MCF 10A (cell line): ENCODE measurements at regions of chr2 and their contacts with region 1.

Region 1: DNA sequence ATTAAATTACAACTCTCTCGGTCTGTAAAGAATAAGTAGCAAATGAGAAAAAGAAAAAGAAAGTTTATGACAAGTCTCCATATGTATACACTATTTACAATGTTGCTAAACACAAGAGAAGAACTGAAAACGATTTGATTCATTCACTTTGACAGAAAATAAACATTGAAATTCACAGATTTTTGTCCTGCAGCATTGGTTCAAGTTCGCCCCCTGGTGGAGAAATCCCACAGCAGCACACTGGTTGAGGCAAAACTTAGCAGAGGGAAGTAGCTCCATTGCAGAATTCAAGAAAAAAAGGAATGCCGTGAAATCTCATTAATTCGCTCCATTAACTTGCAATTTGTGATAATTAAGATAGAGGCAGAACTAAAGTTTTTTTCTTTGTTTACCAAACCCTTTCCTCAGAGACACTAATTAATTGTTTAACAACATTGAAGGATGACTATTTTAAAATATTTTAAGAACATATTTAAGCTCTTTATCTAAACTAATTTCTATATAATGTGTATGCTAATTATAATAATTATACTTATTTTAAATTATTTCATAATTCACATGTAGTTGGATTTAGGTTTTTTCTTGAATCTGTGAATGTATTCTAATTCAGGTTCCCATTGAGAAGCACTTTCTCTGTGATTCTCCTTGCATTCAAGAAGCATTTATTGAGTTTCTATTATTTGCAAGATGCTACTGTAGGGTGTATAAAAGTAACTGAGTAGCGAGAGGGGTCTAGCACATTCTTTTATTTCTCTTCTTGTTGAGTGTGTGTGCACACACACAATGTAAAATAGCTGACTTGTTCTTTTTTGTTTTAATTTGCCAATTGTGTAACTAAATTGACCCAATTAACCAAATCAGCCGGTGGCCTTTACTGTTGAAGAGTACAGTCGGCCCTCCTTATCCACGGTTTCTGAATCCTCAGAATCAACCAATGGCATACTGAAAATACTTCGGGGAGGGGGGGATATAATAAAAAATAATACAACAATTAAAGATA is 74.1 kb downstream of the COL4A3 start:
- DNase-seq: peak; percentile 73
- H3K4me3 Mint-ChIP-seq: no peak overlapping the region
- H3K27ac Mint-ChIP-seq: no peak overlapping the region
- H3K4me1 Mint-ChIP-seq: no peaks in the 10 kb centered on the region
- H3K27me3 Mint-ChIP-seq: peaks cover 18% of the 10 kb centered on the region
- CTCF ChIP-seq: peak; percentile 87

Region 2: DNA sequence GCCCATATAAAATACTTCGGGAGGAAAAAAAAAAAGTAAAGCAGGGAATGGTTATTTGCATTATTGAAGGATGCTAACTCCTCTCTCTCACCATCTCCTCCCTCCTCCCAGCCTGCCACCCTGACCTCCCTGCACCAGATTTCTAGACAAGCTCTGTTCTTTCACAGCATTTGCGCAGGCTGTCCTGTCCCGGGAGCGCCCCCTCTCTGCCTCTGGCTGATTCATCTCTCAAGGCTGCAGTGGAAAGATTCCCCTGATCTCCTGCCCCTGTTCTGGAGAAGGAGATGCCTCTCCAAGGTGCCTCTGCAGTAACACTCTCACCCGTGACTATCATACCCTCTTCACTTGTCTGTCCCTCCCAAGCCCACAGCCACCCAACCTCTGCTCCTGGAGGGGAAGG is 113.0 kb before region 1 on chr2:
- CTCF ChIA-PET with region 1: interaction called, 141 read pairs
- POLR2A ChIA-PET with region 1: interaction called, 6 read pairs
- intact Hi-C with region 1: loop called (anchors 1 kb)
- DNase-seq: no peak
- H3K4me3 Mint-ChIP-seq: no peak overlapping the region
- H3K27ac Mint-ChIP-seq: no peak overlapping the region
- H3K4me1 Mint-ChIP-seq: peaks cover 5% of the 10 kb centered on the region
- H3K27me3 Mint-ChIP-seq: peaks cover 25% of the 10 kb centered on the region
- CTCF ChIP-seq: no peak

Region 3: GRCh38 chr2:227132986-227133385 is 105.6 kb before region 1 on chr2:
- CTCF ChIA-PET with region 1: interaction called, 141 read pairs
- POLR2A ChIA-PET with region 1: interaction called, 6 read pairs
- intact Hi-C with region 1: loop called (anchors 1 kb)
- DNase-seq: no peak
- H3K4me3 Mint-ChIP-seq: no peak overlapping the region
- H3K27ac Mint-ChIP-seq: no peak overlapping the region
- H3K4me1 Mint-ChIP-seq: peaks cover 5% of the 10 kb centered on the region
- H3K27me3 Mint-ChIP-seq: peaks cover 14% of the 10 kb centered on the region
- CTCF ChIP-seq: no peak

Region 4: GRCh38 chr2:227163998-227164762 is 74.4 kb before region 1 on chr2 and contains the starts of genes COL4A3 and COL4A4:
- CTCF ChIA-PET with region 1: interaction called, 15 read pairs
- POLR2A ChIA-PET with region 1: interaction called, 3 read pairs
- intact Hi-C with region 1: no loop called
- DNase-seq: peak; percentile 43
- H3K4me3 Mint-ChIP-seq: peak within 1 kb of the TSS; percentile 71
- H3K27ac Mint-ChIP-seq: no peak within 1 kb of the TSS
- H3K4me1 Mint-ChIP-seq: no peaks in the 10 kb centered on the region
- H3K27me3 Mint-ChIP-seq: peaks cover 42% of the 10 kb centered on the region
- CTCF ChIP-seq: no peak
- total RNA-seq, gene COL4A3: 0.12 and 0.49 TPM in 2 replicates
- total RNA-seq, gene COL4A4: 0.25 and 0.30 TPM in 2 replicates

Region 5: GRCh38 chr2:227219312-227220105 is 19.0 kb before region 1 on chr2:
- CTCF ChIA-PET with region 1: interaction called, 41 read pairs
- POLR2A ChIA-PET with region 1: no interaction called
- intact Hi-C with region 1: no loop called
- DNase-seq: no peak
- H3K4me3 Mint-ChIP-seq: no peak overlapping the region
- H3K27ac Mint-ChIP-seq: no peak overlapping the region
- H3K4me1 Mint-ChIP-seq: peaks cover 5% of the 10 kb centered on the region
- H3K27me3 Mint-ChIP-seq: no peaks in the 10 kb centered on the region
- CTCF ChIP-seq: no peak

Region 6: GRCh38 chr2:227228061-227228667 is 10.4 kb before region 1 on chr2:
- CTCF ChIA-PET with region 1: interaction called, 41 read pairs
- POLR2A ChIA-PET with region 1: no interaction called
- intact Hi-C with region 1: no loop called
- DNase-seq: peak; percentile 82
- H3K4me3 Mint-ChIP-seq: peak overlapping the region; percentile 63
- H3K27ac Mint-ChIP-seq: peak overlapping the region; percentile 66
- H3K4me1 Mint-ChIP-seq: peaks cover 19% of the 10 kb centered on the region
- H3K27me3 Mint-ChIP-seq: no peaks in the 10 kb centered on the region
- CTCF ChIP-seq: no peak

Region 7: DNA sequence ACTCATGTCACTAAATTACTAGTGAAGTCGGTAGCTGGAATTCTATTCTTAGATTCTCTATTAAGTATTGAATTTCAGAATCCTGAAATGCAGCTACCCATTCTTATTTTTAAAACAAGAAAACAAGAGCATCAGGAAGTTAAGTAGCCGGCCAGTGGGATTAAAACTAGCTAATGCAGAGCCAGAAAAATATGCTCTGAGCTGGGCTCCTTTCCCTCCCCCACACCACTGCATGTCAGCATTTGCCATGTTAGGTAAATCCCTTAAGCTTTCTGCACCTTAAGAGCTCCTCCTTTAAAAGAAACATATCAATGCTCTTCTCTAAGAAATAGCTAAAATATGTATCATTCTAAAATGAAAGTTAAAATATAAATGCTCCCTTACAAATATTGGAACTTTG is 14.3 kb after region 1 on chr2:
- CTCF ChIA-PET with region 1: interaction called, 16 read pairs
- POLR2A ChIA-PET with region 1: no interaction called
- intact Hi-C with region 1: no loop called
- DNase-seq: no peak
- H3K4me3 Mint-ChIP-seq: no peak overlapping the region
- H3K27ac Mint-ChIP-seq: no peak overlapping the region
- H3K4me1 Mint-ChIP-seq: no peaks in the 10 kb centered on the region
- H3K27me3 Mint-ChIP-seq: no peaks in the 10 kb centered on the region
- CTCF ChIP-seq: no peak

Region 8: DNA sequence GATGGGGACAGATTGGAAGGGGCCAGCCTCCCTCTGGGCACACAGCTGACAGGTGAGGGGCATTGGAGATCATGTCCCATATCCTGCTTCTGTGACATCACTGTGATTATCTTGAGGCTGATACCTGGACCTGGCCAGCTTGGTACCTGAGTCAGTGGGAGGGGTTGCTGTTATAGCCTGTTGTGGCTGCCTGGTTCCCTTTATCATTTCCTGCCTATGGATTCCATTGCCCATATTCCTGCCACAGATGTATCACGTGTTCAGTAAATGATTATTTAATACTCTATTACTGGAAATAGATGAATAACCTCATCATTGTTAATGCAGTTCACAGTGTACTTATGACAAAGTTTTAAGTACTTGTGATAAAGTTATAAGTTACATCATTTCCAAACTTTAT is 157.0 kb after region 1 on chr2:
- CTCF ChIA-PET with region 1: no interaction called
- POLR2A ChIA-PET with region 1: no interaction called
- intact Hi-C with region 1: no loop called
- DNase-seq: no peak
- H3K4me3 Mint-ChIP-seq: no peak overlapping the region
- H3K27ac Mint-ChIP-seq: no peak overlapping the region
- H3K4me1 Mint-ChIP-seq: peaks cover 13% of the 10 kb centered on the region
- H3K27me3 Mint-ChIP-seq: no peaks in the 10 kb centered on the region
- CTCF ChIP-seq: no peak

Region 9: GRCh38 chr2:227582369-227582768 is 343.8 kb after region 1 on chr2:
- CTCF ChIA-PET with region 1: no interaction called
- POLR2A ChIA-PET with region 1: no interaction called
- intact Hi-C with region 1: no loop called
- DNase-seq: no peak
- H3K4me3 Mint-ChIP-seq: no peak overlapping the region
- H3K27ac Mint-ChIP-seq: no peak overlapping the region
- H3K4me1 Mint-ChIP-seq: no peaks in the 10 kb centered on the region
- H3K27me3 Mint-ChIP-seq: no peaks in the 10 kb centered on the region
- CTCF ChIP-seq: no peak